ENCODE measurements at regions of chr7 and their contacts with region 1.

Region 1: DNA sequence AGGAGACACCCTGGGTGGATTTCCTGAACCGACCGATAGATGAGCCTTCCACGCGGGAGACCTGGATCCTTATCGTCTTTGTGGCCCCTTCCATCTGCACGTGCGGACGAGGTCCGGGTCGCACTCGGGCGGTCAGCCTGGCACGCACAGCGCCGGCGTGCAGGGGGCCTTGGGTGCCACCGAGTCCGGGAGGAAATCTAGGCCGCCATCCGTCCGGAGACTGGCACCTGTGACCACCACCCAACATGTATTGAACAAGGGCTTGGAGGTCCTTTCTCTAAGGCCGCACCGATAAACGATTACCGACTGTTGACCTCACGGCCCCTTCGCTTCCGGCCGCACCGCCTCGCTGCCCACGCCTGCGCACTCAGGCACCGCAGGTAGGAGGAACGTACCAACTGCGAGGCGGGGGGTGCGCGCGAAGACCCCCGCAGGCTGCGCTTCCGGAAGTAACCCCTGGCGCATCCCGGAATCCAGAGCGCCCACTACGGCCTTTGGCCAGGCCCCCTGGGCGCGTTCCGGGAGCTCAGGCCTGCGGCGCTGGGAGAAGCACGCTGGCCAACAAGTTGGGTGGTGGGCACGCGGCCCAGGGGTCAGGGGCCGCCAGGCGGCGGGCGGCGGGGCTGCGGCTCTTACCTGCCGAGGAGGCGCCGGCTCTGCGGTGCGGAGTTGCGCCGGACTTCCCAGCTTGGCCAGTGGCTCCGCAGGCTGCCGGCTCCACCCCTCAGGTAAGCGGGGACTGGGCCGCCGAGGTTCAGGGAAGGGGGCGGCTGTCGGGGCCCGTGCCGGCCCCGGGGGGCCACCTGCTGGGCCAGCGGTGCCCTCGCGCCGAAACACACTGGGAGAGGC is at the starts of genes ACTR3C and LRRC61:
- DNase-seq: peak; percentile 82
- CTCF ChIP-seq: peak; percentile 26

Region 2: DNA sequence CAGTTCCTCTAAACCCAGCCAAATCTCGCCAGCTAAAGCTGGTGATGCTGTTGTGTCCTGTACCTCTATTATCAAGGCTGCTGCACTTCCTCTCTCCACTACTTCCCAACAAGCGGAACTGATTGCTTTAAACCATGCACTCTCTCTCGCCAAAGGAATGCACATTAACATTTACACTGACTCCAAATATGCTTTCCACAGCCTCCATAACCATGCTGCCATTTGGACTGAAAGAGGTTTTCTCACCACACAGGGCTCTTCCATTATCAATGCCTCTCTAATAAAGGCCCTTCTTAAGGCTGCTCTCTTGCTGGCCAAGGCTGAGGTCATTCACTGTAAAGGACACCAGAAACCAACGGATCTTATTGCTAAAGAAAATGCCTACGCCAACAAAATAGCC is 11.3 kb before region 1 on chr7:
- CTCF ChIA-PET with region 1: interaction called, 10 read pairs
- POLR2A ChIA-PET with region 1: no interaction called
- DNase-seq: no peak
- CTCF ChIP-seq: no peak

Region 3: GRCh38 chr7:150404805-150405583 is 81.9 kb after region 1 on chr7:
- CTCF ChIA-PET with region 1: no interaction called
- POLR2A ChIA-PET with region 1: no interaction called
- DNase-seq: peak; percentile 87
- CTCF ChIP-seq: peak; percentile 45

Region 4: GRCh38 chr7:151057989-151058780 is 735.1 kb after region 1 on chr7:
- CTCF ChIA-PET with region 1: no interaction called
- POLR2A ChIA-PET with region 1: no interaction called
- DNase-seq: peak; percentile 99
- CTCF ChIP-seq: no peak

Measured in GM10248 (cell line).